Gastrocnemius medialis (tissue), 4 donors: ENCODE measurements at regions of chr6 and their contacts with region 1.

Region 1: DNA sequence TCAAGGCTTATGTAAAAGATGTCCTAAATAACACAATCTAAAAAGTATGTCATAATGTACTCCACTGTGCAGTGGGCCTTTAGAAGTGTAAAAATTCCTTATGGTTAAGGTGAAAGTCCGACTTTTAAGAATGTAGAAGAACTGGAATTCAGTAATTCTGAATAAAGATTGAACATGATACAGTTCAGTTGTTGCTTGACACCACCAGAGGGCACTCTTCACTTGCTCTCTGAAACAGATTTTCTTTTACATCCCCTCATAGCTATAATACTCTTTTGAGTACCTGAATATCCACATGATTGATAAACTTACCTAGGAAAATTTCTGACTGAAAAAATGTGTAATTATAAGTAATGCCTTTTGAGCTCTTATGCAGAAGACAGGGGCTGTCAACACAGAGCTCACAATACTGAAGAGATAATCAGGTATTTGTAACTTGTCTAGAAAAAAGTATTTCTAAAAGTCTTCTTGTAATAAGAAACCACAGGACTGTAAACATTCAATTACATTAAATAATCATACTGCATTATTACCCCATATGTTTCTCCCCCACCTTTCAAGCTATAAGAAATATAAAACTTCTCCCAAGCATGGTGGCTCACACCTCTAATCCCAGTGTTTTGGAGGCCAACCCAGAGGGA is 92.1 kb downstream of the POPDC3 start:
- DNase-seq: peak in 1 of 2 donors; percentile 21
- ATAC-seq: peak; percentile 71 to 74
- H3K4me3 ChIP-seq: no peak overlapping the region
- H3K27ac ChIP-seq: no peak overlapping the region
- H3K4me1 ChIP-seq: peaks cover 4 to 5% of the 10 kb centered on the region in 2 donors
- H3K27me3 ChIP-seq: no peaks in the 10 kb centered on the region
- CTCF ChIP-seq: peak; percentile 75 to 88 (median 82)
- POLR2A ChIP-seq: no peak

Region 2: DNA sequence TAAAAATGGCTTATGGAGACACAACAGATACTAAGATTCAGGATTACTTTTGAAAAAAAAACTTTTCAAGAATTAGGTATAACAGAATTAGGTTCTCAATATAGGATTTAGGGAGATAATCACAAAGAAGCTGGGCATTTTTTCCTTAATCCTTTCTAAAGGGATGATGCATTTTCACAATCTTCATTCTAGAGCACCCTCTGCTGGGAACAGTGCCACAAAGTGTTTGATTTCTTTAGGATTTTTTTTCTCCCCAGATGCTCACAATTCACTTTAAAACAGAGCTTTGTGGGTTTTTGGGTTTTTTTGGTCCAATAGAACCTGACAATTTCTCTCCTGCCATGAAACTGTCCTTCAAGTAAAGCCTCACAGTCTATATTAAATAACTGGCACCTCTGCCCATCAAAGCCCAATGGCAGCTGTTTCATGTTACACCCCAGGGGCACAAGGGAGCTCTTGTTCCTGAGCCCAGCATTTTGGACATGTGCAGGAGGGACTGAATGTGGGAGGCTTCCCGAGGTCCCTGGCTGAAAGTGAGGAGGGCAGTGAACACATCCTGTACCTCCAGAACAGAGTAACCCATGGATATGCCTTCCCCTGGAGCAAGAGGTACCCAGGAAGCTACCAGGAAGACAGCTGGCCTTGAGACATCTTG is 275.5 kb after region 1 on chr6:
- in situ Hi-C with region 1: no loop called
- intact Hi-C with region 1: loop called (anchors 2 kb)
- DNase-seq: peak in 1 of 2 donors; percentile 32
- ATAC-seq: peak; percentile 39 to 62
- H3K4me3 ChIP-seq: no peak overlapping the region
- H3K27ac ChIP-seq: peak overlapping the region; percentile 63 to 74 (median 67)
- H3K4me1 ChIP-seq: peaks cover 27 to 29% of the 10 kb centered on the region in 2 donors
- H3K27me3 ChIP-seq: no peaks in the 10 kb centered on the region
- CTCF ChIP-seq: peak in 4 of 5 experiments; percentile 31 to 37 (median 35)
- POLR2A ChIP-seq: no peak

Region 3: DNA sequence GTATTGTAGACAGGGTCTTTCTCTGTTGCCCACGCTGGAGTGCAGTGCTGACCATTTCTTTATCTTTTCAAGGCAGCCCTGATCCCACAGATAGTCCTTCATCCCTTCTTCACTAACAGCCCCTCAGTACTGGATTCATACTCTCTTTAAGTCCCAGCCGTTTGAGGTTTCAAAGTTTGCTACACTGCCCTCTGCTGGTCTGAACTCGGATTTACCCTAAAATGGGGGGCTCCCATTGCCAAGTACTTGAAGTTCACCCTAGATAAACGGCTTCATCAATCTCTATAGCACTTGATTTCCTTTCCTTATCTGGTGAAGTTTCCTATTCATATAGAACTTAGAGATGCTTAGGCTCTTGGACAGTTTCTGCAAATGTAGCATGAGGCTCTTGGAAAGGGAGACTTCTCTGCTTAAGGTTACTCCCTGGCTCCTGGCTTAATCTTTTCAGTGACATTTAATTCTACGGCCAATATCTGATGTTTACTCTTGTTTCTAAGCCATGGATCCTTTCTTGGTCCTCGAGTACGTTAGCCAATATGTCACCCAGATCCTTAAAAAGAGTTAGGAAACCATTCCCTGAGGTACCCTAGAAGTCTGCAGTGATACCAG is 336.6 kb after region 1 on chr6:
- in situ Hi-C with region 1: loop called in 2 of 4 experiments (anchors 5 to 10 kb)
- intact Hi-C with region 1: loop called (anchors 1 kb)
- DNase-seq: peak in 1 of 2 donors; percentile 38
- ATAC-seq: peak; percentile 50 to 82
- H3K4me3 ChIP-seq: no peak overlapping the region
- H3K27ac ChIP-seq: no peak overlapping the region
- H3K4me1 ChIP-seq: no peaks in the 10 kb centered on the region
- H3K27me3 ChIP-seq: no peaks in the 10 kb centered on the region
- CTCF ChIP-seq: peak; percentile 41 to 65 (median 63)
- POLR2A ChIP-seq: no peak

Region 4: GRCh38 chr6:106300944-106301343 is 1213.3 kb after region 1 on chr6:
- in situ Hi-C with region 1: loop called in 1 of 4 experiments (anchors 25 kb)
- intact Hi-C with region 1: no loop called
- DNase-seq: no peak
- ATAC-seq: peak in 1 of 2 donors; percentile 41
- H3K4me3 ChIP-seq: no peak overlapping the region
- H3K27ac ChIP-seq: no peak overlapping the region
- H3K4me1 ChIP-seq: peaks cover 0 to 7% of the 10 kb centered on the region in 2 donors
- H3K27me3 ChIP-seq: no peaks in the 10 kb centered on the region
- CTCF ChIP-seq: peak in 4 of 5 experiments; percentile 26 to 46 (median 32)
- POLR2A ChIP-seq: no peak